ENCODE measurements at regions of chr12 and their contacts with region 1.

Region 1: GRCh38 chr12:47216150-47216677 is 136.5 kb upstream of the AMIGO2 start:
- DNase-seq: peak; percentile 92
- H3K4me3 ChIP-seq: peak overlapping the region; percentile 74
- H3K27ac ChIP-seq: peak overlapping the region; percentile 92
- H3K4me1 ChIP-seq: peaks cover 59% of the 10 kb centered on the region
- CTCF ChIP-seq: 0 out of 2 replicates have a peak, but pooled peaks have one; percentile 19

Region 2: DNA sequence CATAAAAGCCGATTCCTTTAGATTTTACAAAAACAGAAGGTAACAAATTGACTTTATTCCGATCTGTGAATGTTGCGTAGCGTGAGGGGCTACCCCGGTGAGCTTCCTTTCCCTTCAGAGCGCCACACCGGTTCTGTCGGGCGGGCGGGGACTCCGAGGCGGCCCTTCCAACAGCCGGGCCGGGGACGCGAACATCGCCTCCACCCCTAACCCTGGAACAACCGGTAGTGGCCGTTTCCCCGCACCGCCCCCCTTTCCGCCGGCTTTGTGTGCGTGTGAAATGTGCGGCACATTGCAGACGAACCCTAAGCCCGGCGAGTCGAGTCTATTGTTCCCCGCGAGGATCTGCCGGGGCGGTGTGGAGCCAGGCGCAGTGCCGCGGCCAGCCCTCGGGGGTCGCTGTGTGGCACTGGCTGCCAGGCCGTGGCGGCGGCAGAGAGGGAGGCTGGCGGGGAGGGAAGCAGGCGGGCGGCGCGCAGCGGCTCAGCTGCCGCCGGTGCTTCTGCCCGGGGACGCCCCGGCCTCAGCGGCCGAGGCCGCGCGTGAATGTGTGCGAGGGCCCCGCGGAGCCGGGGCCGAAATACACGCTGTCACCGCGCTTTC is 1487.5 kb before region 1 on chr12:
- CTCF ChIA-PET with region 1: no interaction called
- POLR2A ChIA-PET with region 1: no interaction called
- intact Hi-C with region 1: loop called (anchors 5 kb)
- DNase-seq: peak; percentile 98
- H3K4me3 ChIP-seq: peak overlapping the region; percentile 98
- H3K27ac ChIP-seq: peak overlapping the region; percentile 97
- H3K4me1 ChIP-seq: peaks cover 25% of the 10 kb centered on the region
- CTCF ChIP-seq: peak; percentile 79

Region 3: GRCh38 chr12:46268590-46269558 is 947.3 kb before region 1 on chr12 and contains the start of gene SLC38A1:
- CTCF ChIA-PET with region 1: no interaction called
- POLR2A ChIA-PET with region 1: no interaction called
- intact Hi-C with region 1: loop called (anchors 10 kb)
- DNase-seq: peak; percentile 88
- H3K4me3 ChIP-seq: peak within 1 kb of the TSS; percentile 92
- H3K27ac ChIP-seq: peak within 1 kb of the TSS; percentile 91
- H3K4me1 ChIP-seq: peaks cover 44% of the 10 kb centered on the region
- CTCF ChIP-seq: 0 out of 2 replicates have a peak, but pooled peaks have one; percentile 25
- total RNA-seq, gene SLC38A1: 114 and 117 TPM in 2 replicates

Region 4: DNA sequence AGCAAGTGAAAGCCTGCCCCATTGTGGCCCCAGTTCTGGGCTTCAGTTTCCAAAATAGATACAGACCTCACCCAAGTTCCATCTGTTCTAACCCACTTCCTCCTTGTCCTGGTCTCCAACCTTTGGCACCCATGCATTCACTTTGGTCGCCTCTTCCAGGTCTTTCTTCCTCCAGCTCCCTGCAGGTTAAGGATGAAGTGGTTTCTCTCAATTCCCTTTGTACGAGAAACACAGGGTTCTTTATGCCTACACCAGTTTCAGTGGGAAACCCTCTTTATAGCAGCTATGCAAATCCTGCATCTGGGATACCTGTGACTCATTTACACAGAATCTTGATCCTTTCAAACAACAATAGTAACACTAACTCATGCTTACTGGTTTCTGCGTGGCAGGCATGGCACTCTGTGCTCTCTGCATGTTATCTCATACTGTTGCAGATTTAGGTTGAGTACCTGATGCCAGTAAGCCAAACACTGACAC is 25.9 kb before region 1 on chr12:
- CTCF ChIA-PET with region 1: interaction called, 3 read pairs
- POLR2A ChIA-PET with region 1: interaction called, 17 read pairs
- intact Hi-C with region 1: no loop called
- DNase-seq: no peak
- H3K4me3 ChIP-seq: no peak overlapping the region
- H3K27ac ChIP-seq: no peak overlapping the region
- H3K4me1 ChIP-seq: peaks cover 60% of the 10 kb centered on the region
- CTCF ChIP-seq: no peak

Region 5: DNA sequence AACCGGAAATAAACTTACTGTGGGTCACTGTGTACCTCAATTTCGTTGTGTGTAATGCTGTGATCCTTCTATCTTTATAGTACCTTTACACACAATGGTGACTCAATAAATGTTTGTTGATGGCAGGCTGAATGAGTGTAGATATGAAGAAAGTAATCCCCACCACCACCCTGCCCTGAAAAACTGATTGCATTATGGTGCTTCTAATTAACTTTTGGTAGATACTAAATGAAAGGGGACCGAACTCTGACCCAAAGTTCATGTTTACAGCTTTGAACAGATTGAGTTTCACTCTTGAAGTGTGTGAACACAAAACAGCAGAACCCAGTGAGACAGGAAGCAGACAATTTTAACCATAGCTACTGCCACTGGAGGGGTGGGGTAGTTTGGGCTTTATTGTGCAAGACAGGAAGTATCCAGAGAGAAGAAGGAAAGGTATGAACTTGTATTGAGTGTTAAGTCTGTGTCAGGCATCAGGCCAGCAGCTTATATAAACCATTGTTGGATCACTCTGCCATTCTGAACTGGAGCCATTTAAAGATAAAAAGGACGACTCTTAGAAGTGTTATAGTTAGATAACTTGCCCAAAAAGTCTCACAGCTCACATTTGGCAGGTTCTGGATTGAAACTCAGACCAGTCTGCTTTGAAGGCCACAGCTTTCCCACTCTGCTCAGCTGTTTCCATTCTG is 60.6 kb after region 1 on chr12:
- CTCF ChIA-PET with region 1: no interaction called
- POLR2A ChIA-PET with region 1: interaction called, 10 read pairs
- intact Hi-C with region 1: loop called (anchors 2 kb)
- DNase-seq: peak; percentile 79
- H3K4me3 ChIP-seq: peak overlapping the region; percentile 31
- H3K27ac ChIP-seq: peak overlapping the region; percentile 49
- H3K4me1 ChIP-seq: peaks cover 36% of the 10 kb centered on the region
- CTCF ChIP-seq: no peak

Region 6: GRCh38 chr12:47361389-47362021 is 145.3 kb after region 1 on chr12:
- CTCF ChIA-PET with region 1: no interaction called
- POLR2A ChIA-PET with region 1: no interaction called
- intact Hi-C with region 1: loop called (anchors 2 kb)
- DNase-seq: peak; percentile 79
- H3K4me3 ChIP-seq: peak overlapping the region; percentile 54
- H3K27ac ChIP-seq: peak overlapping the region; percentile 49
- H3K4me1 ChIP-seq: peaks cover 39% of the 10 kb centered on the region
- CTCF ChIP-seq: peak; percentile 63

Region 7: DNA sequence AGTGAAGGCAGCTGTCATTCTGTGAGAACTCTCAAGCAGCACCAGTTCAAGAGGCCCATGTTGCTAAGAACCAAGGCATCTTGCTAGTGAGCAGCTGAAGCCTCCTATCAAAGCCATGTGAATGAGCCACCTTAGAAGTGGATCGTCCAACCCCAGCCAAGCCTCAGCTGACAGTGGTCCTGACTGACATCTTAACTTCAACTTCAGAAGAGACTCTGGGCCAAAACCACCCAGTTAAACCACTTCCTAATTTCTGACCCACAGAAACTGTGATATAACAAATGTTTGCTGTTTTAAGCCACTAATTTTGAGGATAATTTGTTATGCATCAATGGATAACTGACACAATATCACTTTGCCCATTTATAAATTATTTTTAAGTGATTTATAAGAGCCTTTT is 233.6 kb after region 1 on chr12:
- CTCF ChIA-PET with region 1: no interaction called
- POLR2A ChIA-PET with region 1: no interaction called
- intact Hi-C with region 1: no loop called
- DNase-seq: no peak
- H3K4me3 ChIP-seq: no peak overlapping the region
- H3K27ac ChIP-seq: no peak overlapping the region
- H3K4me1 ChIP-seq: no peaks in the 10 kb centered on the region
- CTCF ChIP-seq: no peak

Region 8: DNA sequence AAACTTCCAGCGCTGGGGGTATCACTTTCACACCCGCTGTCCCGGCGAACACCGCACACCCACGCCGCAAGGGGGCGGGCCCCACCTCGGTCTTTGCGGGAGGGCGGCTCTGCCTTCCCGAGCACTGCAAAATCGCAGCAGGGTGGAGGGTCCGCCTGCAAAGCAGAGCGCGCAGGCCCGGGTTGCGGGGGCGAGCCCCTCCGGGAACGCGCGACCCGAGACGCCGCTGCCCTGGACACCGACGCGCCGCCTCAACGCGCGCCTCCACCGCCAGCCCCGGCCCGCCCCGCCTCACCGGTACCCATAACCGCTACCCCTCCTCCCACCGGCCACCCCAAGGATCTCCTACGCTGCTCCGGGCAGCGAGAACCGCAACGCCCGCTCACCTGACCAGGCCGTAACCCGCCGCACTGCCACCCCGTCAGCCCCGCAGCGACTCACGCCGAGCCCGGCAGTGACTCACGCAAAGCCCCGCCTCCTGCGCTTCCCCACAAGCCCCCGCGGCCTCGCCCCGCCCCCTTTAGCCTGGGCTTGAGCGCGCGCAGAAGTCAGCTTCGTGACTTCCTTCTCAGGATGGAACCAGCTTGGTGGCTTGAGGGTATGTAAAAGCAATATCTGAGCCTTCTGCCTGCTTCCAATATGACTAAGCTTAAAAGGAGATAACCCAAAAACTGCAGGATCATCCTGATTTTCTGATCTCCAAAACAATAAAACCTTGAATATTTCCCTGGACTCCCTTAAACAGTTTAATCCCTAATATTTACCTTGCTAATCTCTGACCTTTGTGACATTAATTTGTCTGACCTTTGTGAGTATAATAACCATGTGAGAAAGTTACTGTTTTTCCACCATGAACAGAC is 489.6 kb after region 1 on chr12 and contains the start of gene RPAP3:
- CTCF ChIA-PET with region 1: no interaction called
- POLR2A ChIA-PET with region 1: no interaction called
- intact Hi-C with region 1: loop called (anchors 2 kb)
- DNase-seq: peak; percentile 97
- H3K4me3 ChIP-seq: peak within 1 kb of the TSS; percentile 86
- H3K27ac ChIP-seq: peak within 1 kb of the TSS; percentile 83
- H3K4me1 ChIP-seq: peaks cover 54% of the 10 kb centered on the region
- CTCF ChIP-seq: peak; percentile 74
- total RNA-seq, gene RPAP3: 21.6 and 25.1 TPM in 2 replicates